ENCODE measurements at regions of chr18 and their contacts with region 1.

Region 1: DNA sequence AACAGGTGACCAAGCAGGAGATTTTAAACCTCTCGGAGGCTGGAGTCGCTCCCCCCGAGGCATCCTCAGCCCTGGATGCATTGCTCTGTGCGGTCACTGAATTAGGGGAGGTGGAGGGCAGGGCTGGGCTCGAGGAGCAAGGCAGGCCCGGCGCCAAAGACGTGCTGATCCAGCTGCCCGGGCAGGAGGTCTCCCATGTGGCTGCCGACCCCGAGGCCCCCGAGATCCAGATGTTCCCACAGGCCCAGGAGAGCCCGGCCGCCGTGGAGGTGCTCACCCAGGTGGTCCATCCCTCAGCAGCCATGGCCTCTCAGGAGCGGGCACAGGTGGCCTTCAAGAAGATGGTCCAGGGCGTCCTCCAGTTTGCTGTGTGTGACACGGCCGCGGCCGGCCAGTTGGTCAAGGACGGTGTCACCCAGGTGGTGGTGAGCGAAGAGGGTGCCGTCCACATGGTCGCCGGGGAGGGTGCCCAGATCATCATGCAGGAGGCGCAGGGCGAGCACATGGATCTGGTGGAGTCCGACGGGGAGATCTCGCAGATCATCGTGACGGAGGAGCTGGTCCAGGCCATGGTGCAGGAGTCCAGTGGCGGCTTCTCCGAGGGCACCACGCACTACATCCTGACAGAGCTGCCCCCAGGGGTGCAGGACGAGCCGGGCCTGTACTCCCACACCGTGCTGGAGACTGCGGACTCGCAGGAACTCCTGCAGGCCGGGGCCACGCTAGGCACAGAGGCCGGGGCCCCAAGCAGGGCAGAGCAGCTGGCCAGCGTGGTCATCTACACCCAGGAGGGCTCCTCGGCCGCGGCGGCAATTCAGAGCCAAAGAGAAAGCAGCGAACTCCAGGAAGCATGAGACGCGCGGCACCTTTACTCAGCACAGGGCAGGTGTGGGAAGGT is 145.1 kb downstream of the PTGR3 start:
- DNase-seq: no peak
- ATAC-seq: no peak
- H3K4me3 ChIP-seq: no peak overlapping the region
- H3K27ac ChIP-seq: no peak overlapping the region
- H3K4me1 ChIP-seq: no peaks in the 10 kb centered on the region
- CTCF ChIP-seq: no peak
- EP300 ChIP-seq: no peak
- POLR2A ChIP-seq: no peak
- RAD21 ChIP-seq: no peak

Region 2: DNA sequence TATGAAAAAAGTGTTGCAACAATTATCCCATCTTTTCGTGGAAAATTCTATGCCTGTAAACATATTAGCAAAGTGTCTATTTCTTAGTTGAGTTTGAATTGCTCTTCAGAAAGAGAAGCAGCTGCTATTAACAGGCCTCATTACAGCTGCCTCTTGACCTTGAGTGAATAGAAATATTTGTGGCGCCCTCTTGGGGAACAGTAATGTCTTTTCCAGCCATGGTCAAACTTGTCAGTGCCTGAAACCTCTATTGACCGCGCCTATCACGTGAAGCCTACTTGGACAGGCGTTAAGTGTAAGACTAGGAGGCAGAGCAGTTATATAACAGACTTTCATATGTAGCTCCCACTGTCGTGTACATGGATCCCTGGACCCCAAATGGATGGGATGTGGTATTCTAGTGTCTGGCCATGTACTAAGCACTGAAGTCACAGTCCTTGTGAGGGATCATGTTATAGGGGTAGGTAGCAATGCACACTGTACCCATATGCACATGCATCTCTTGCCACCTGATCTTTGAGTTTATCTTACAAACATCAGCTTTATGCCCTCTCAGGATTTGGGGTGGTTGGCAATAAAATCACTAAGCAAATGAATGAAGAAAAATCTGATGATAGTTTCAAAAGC is 99.9 kb before region 1 on chr18:
- CTCF ChIA-PET with region 1: no interaction called
- POLR2A ChIA-PET with region 1: no interaction called
- DNase-seq: peak in 1 of 2 experiments; percentile 47
- ATAC-seq: peak; percentile 39 to 76; a peak in 2 of 6 replicates
- H3K4me3 ChIP-seq: no peak overlapping the region
- H3K27ac ChIP-seq: no peak overlapping the region
- H3K4me1 ChIP-seq: no peaks in the 10 kb centered on the region
- CTCF ChIP-seq: peak; percentile 40
- EP300 ChIP-seq: no peak
- POLR2A ChIP-seq: no peak
- RAD21 ChIP-seq: peak; percentile 43 to 56; a peak in 3 of 5 replicates

Region 3: GRCh38 chr18:75210274-75211001 is 146.6 kb after region 1 on chr18 and contains the start of gene TSHZ1:
- CTCF ChIA-PET with region 1: no interaction called
- POLR2A ChIA-PET with region 1: interaction called, 12 read pairs
- DNase-seq: peak; percentile 51 to 76
- ATAC-seq: peak in 1 of 2 experiments; percentile 56; a peak in 3 of 6 replicates
- H3K4me3 ChIP-seq: peak within 1 kb of the TSS; percentile 83
- H3K27ac ChIP-seq: peak within 1 kb of the TSS; percentile 92 to 99
- H3K4me1 ChIP-seq: peaks cover 22% of the 10 kb centered on the region
- CTCF ChIP-seq: no peak
- EP300 ChIP-seq: no peak
- POLR2A ChIP-seq: no peak
- RAD21 ChIP-seq: no peak
- polyA plus RNA-seq, gene TSHZ1: 2.2 and 2.9 TPM in 2 replicates

Measured in A549 (cell line).